Activated naive CD4-positive, alpha-beta T cell treated with anti-CD3 and anti-CD28 coated beads for 36 hours (primary cell): ENCODE measurements at regions of chr11 and their contacts with region 1.

Region 1: DNA sequence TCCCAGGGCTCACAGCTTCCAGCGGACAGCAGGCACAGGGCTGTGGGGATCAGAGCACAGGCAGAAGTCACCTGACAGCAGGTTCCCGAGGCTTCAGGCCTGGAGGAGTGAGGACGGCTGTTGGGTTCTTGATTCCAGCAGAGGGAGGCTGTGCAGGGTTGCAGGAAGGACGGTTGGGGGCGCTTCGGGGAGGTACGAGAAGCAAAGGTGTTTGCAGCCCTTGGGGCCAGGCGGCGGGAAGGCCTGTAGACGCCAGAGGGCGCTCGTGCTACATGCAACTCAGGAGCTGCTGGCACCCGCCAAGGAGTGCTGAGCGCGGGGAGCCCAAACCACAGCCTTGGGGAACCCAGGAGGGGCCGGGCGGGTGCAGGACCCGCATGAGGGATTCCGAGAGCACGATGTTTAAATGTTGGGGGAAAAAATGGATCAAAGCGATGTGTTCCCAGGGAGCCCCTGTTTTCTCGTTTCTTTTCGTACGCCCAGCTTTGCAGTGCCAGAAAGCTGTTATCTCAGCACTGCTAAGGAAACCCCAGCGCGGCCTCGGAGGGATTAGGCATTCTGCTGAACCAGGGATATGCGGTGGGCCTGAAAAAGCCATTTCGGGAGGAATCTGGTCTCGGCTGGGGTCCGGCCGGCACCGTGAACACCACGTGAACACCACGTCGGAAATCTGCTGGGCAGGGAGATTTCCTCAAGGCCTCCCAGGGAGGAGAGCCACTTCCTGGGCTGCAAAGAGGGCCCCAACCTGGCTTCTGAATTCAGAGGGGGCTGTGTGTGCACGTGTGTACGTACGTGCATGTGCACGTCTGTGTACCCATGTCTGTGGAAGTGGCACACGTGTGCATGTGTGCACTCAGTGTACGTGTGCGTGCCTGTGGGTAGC is 88.1 kb downstream of the KCNQ1 start:
- DNase-seq: peak; percentile 96
- H3K4me3 Mint-ChIP-seq: peak overlapping the region; percentile 66
- H3K27ac Mint-ChIP-seq: no peak overlapping the region
- H3K4me1 Mint-ChIP-seq: peaks cover 15% of the 10 kb centered on the region
- H3K27me3 Mint-ChIP-seq: no peaks in the 10 kb centered on the region

Region 2: GRCh38 chr11:1970956-1971355 is 562.0 kb before region 1 on chr11:
- CTCF ChIA-PET with region 1: no interaction called
- intact Hi-C with region 1: no loop called
- DNase-seq: no peak
- H3K4me3 Mint-ChIP-seq: no peak overlapping the region
- H3K27ac Mint-ChIP-seq: no peak overlapping the region
- H3K4me1 Mint-ChIP-seq: no peaks in the 10 kb centered on the region
- H3K27me3 Mint-ChIP-seq: no peaks in the 10 kb centered on the region

Region 3: GRCh38 chr11:2120359-2121100 is 412.4 kb before region 1 on chr11:
- CTCF ChIA-PET with region 1: no interaction called
- intact Hi-C with region 1: no loop called
- DNase-seq: no peak
- H3K4me3 Mint-ChIP-seq: no peak overlapping the region
- H3K27ac Mint-ChIP-seq: no peak overlapping the region
- H3K4me1 Mint-ChIP-seq: no peaks in the 10 kb centered on the region
- H3K27me3 Mint-ChIP-seq: peaks cover 3% of the 10 kb centered on the region

Region 4: GRCh38 chr11:2305140-2305840 is 227.7 kb before region 1 on chr11:
- CTCF ChIA-PET with region 1: interaction called, 8 read pairs
- intact Hi-C with region 1: loop called (anchors 2 kb)
- DNase-seq: peak; percentile 91
- H3K4me3 Mint-ChIP-seq: no peak overlapping the region
- H3K27ac Mint-ChIP-seq: no peak overlapping the region
- H3K4me1 Mint-ChIP-seq: peaks cover 44% of the 10 kb centered on the region
- H3K27me3 Mint-ChIP-seq: no peaks in the 10 kb centered on the region

Region 5: GRCh38 chr11:2420502-2421225 is 112.3 kb before region 1 on chr11:
- CTCF ChIA-PET with region 1: interaction called, 81 read pairs
- intact Hi-C with region 1: no loop called
- DNase-seq: peak; percentile 75
- H3K4me3 Mint-ChIP-seq: no peak overlapping the region
- H3K27ac Mint-ChIP-seq: no peak overlapping the region
- H3K4me1 Mint-ChIP-seq: peaks cover 2% of the 10 kb centered on the region
- H3K27me3 Mint-ChIP-seq: no peaks in the 10 kb centered on the region

Region 6: DNA sequence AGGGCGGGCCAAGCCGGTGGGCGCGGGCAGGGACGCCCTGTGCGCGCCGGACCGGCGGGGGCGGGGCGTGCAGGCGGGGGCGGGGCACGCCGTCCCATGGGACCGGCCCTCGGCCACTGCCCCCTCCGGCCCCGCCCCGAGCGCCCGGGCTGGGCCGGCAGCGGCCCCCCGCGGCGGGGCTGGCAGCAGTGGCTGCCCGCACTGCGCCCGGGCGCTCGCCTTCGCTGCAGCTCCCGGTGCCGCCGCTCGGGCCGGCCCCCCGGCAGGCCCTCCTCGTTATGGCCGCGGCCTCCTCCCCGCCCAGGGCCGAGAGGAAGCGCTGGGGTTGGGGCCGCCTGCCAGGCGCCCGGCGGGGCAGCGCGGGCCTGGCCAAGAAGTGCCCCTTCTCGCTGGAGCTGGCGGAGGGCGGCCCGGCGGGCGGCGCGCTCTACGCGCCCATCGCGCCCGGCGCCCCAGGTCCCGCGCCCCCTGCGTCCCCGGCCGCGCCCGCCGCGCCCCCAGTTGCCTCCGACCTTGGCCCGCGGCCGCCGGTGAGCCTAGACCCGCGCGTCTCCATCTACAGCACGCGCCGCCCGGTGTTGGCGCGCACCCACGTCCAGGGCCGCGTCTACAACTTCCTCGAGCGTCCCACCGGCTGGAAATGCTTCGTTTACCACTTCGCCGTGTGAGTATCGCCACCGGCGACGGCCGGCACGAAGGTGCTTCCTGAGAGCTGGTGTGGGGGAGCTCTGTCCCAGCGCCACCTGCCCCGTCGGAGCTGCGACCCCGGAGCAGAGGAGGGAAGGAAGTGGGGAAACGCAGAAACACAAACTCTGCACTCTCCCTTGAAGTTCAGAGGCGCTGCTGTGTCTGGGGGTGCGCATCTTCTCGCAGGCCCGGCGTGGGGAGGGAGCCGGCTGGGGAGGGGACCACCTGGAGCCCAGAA is 87.9 kb before region 1 on chr11 and contains the start of gene KCNQ1:
- CTCF ChIA-PET with region 1: interaction called, 16 read pairs
- intact Hi-C with region 1: loop called (anchors 5 kb)
- DNase-seq: peak; percentile 40
- H3K4me3 Mint-ChIP-seq: peak within 1 kb of the TSS; percentile 89
- H3K27ac Mint-ChIP-seq: no peak within 1 kb of the TSS
- H3K4me1 Mint-ChIP-seq: peaks cover 26% of the 10 kb centered on the region
- H3K27me3 Mint-ChIP-seq: no peaks in the 10 kb centered on the region
- total RNA-seq, gene KCNQ1: 10.6 to 10.8 TPM

Region 7: DNA sequence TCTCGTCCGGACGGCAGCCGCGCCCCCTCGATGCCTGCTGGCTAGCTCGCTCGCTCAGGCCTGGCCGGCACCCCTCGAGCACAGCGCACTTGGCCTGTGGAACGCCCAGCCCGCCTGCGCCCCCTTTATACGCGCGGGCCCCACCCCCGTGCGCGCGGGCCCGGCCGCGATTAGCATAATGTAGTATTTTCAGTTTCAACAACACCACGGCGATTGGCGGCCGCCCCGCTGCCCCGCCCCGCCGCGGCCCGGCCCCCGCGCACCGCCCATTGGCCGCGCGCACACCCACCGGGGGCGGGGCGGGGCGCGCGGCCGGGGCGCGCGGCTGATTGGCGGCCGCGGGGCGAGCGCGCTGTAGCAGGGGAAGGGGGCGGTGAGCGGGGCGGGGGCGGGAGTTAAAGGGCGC is 352.7 kb after region 1 on chr11 and contains the start of gene CDKN1C:
- CTCF ChIA-PET with region 1: interaction called, 280 read pairs
- intact Hi-C with region 1: loop called (anchors 1 kb)
- DNase-seq: peak; percentile 76
- H3K4me3 Mint-ChIP-seq: peak within 1 kb of the TSS; percentile 71
- H3K27ac Mint-ChIP-seq: no peak within 1 kb of the TSS
- H3K4me1 Mint-ChIP-seq: no peaks in the 10 kb centered on the region
- H3K27me3 Mint-ChIP-seq: peaks cover 3% of the 10 kb centered on the region
- total RNA-seq, gene CDKN1C: 0.17 to 0.26 TPM

Region 8: GRCh38 chr11:2930704-2931428 is 397.9 kb after region 1 on chr11:
- CTCF ChIA-PET with region 1: interaction called, 12 read pairs
- intact Hi-C with region 1: loop called (anchors 1 kb)
- DNase-seq: peak; percentile 83
- H3K4me3 Mint-ChIP-seq: peak overlapping the region; percentile 66
- H3K27ac Mint-ChIP-seq: peak overlapping the region; percentile 72
- H3K4me1 Mint-ChIP-seq: peaks cover 24% of the 10 kb centered on the region
- H3K27me3 Mint-ChIP-seq: peaks cover 20% of the 10 kb centered on the region